Lower leg skin (tissue), 4 donors: ENCODE measurements at regions of chr13 and their contacts with region 1.

Region 1: GRCh38 chr13:30114571-30115256 is 192.6 kb downstream of the KATNAL1 start:
- DNase-seq: peak; percentile 88 to 98
- H3K4me3 ChIP-seq: peak overlapping the region; percentile 40
- CTCF ChIP-seq: peak in 1 of 3 donors; percentile 75
- POLR2A ChIP-seq: no peak

Region 2: GRCh38 chr13:29508130-29508875 is 606.4 kb before region 1 on chr13:
- intact Hi-C with region 1: loop called (anchors 5 kb)
- DNase-seq: peak; percentile 88 to 98
- H3K4me3 ChIP-seq: no peak overlapping the region
- CTCF ChIP-seq: peak in 1 of 3 donors; percentile 86
- POLR2A ChIP-seq: no peak

Region 3: DNA sequence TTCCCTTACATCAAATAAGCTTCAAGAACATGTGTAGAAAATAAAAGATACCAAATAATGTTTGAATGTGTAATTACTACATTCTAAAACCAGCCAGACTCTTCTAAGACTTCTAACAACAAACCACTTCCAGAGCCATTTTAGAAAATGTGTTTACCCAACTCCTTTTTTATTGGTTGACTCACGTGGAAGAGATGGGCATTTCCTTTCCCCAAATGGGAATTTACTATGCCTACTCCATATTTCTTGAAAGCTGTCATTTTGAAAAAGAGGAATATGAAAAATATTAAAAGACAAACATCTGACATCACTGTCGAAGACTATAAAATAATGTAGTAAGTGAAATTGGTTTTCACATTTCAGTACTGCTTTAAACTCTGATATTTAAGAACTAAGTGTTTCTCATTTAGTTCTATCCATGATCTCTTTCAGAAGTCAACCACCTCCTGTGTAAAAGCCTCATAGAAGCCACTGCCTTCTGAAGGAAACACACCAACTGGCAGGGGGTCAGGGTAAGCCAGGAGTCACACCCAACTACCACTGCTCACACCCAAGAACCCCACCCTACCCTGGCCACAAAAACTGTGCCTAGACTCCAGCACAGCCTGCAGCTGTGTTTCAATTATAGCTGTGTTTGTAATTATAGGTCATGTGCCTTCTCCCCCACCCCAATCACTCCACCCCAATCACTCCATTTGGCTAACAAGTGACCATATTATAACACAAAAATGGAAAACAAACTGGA is 351.1 kb before region 1 on chr13:
- intact Hi-C with region 1: loop called (anchors 10 kb)
- DNase-seq: no peak
- H3K4me3 ChIP-seq: no peak overlapping the region
- CTCF ChIP-seq: no peak
- POLR2A ChIP-seq: no peak

Region 4: GRCh38 chr13:29849731-29850223 is 264.9 kb before region 1 on chr13:
- intact Hi-C with region 1: loop called (anchors 5 kb)
- DNase-seq: peak; percentile 67 to 93
- H3K4me3 ChIP-seq: peak overlapping the region; percentile 90
- CTCF ChIP-seq: no peak
- POLR2A ChIP-seq: no peak

Region 5: GRCh38 chr13:30033681-30034457 is 80.8 kb before region 1 on chr13:
- intact Hi-C with region 1: no loop called
- DNase-seq: no peak
- H3K4me3 ChIP-seq: no peak overlapping the region
- CTCF ChIP-seq: no peak
- POLR2A ChIP-seq: no peak